ENCODE measurements at regions of chrX and their contacts with region 1.

Region 1: DNA sequence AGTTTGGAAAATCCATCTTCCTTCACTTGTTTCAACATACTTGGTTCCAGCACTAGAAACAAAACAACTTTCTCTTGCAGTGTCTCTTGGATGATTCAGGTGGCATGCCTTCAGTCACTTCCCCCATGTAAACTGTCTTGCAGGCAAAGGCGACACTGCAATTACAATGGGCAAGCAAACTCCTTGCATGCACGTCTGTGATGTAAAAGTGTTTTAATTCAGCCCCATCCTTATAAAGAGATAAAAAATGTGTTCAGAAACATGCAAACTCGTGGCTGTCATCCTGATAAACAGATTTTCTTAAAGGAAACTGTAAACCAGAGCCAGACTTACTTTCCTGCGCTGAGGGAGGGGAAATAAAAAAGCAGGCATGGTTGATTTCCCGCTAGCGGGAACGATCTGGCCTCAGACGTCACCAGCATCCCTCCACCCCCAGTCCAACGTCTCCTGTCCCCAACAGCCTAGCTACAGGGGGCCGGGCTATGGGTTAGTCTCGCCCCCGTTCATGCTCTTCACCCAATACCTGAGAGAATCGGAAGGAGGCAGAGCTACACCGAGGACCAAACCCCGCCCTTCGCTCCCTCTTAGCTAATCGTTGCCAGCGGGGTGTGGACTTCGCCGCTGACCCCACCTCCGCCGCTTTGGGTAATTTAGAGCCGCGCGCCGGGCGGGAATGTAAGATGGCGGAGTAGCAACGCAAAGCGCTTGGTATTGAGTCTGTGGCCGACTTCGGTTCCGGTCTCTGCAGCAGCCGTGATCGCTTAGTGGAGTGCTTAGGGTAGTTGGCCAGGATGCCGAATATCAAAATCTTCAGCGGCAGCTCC is at the start of gene PRPS1:
- DNase-seq: peak; percentile 84 to 93 (median 89)
- H3K4me3 ChIP-seq: peak within 1 kb of the TSS; percentile 79 to 86
- H3K4me3 Mint-ChIP-seq: peak within 1 kb of the TSS; percentile 85 to 99 (median 95)
- H3K27ac ChIP-seq: peak within 1 kb of the TSS; percentile 73
- H3K27ac Mint-ChIP-seq: peak within 1 kb of the TSS; percentile 94 to 96 (median 95)
- H3K4me1 ChIP-seq: peaks cover 31% of the 10 kb centered on the region
- H3K4me1 Mint-ChIP-seq: peaks cover 16 to 46% (median 29%) of the 10 kb centered on the region in 4 donors
- H3K27me3 ChIP-seq: no peaks in the 10 kb centered on the region
- H3K27me3 Mint-ChIP-seq: no peaks in the 10 kb centered on the region
- total RNA-seq, gene PRPS1: 56.1 to 61.3 TPM

Region 2: GRCh38 chrX:107205770-107206696 is 422.0 kb before region 1 on chrX and contains the starts of genes DNAAF6 and NUP62CL:
- CTCF ChIA-PET with region 1: no interaction called
- POLR2A ChIA-PET with region 1: no interaction called
- intact Hi-C with region 1: loop called (anchors 5 kb)
- DNase-seq: peak; percentile 64 to 75 (median 70)
- H3K4me3 ChIP-seq: peak within 1 kb of the TSS; percentile 42 to 63
- H3K4me3 Mint-ChIP-seq: peak within 1 kb of the TSS; percentile 85 to 94 (median 91)
- H3K27ac ChIP-seq: peak within 1 kb of the TSS; percentile 43
- H3K27ac Mint-ChIP-seq: peak within 1 kb of the TSS in 6 of 7 donors; percentile 79 to 93 (median 88)
- H3K4me1 ChIP-seq: no peaks in the 10 kb centered on the region
- H3K4me1 Mint-ChIP-seq: peaks cover 2 to 9% (median 7%) of the 10 kb centered on the region in 4 donors
- H3K27me3 ChIP-seq: no peaks in the 10 kb centered on the region
- H3K27me3 Mint-ChIP-seq: peaks cover 0 to 2% of the 10 kb centered on the region in 2 donors
- total RNA-seq, gene DNAAF6: not detected
- total RNA-seq, gene NUP62CL: 2.3 to 2.7 TPM

Region 3: GRCh38 chrX:107396783-107397182 is 231.3 kb before region 1 on chrX:
- CTCF ChIA-PET with region 1: no interaction called
- POLR2A ChIA-PET with region 1: no interaction called
- intact Hi-C with region 1: no loop called
- DNase-seq: no peak
- H3K4me3 ChIP-seq: no peak overlapping the region
- H3K4me3 Mint-ChIP-seq: no peak overlapping the region
- H3K27ac ChIP-seq: no peak overlapping the region
- H3K27ac Mint-ChIP-seq: no peak overlapping the region
- H3K4me1 ChIP-seq: no peaks in the 10 kb centered on the region
- H3K4me1 Mint-ChIP-seq: no peaks in the 10 kb centered on the region
- H3K27me3 ChIP-seq: no peaks in the 10 kb centered on the region
- H3K27me3 Mint-ChIP-seq: peaks cover 5 to 9% of the 10 kb centered on the region in 2 donors

Region 4: DNA sequence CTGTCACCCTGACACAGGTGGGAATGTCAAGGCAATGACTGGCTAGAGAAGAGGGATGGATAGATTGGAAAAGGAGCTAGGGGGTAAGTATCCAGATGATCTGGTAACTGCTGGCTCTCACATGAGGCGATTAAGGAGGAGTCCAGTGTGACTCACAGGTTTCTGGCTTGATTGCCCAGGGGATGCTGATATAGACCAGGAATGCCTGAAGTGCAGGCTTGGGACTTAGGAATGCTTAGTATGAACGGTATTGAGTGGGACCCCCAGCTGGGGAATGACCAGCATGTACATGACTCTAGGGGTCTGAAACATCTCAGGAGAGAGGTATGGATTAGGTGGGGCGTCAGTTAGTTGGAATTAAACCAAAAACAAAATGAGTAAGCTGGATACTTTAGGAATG is 65.6 kb before region 1 on chrX:
- CTCF ChIA-PET with region 1: no interaction called
- POLR2A ChIA-PET with region 1: no interaction called
- intact Hi-C with region 1: no loop called
- DNase-seq: no peak
- H3K4me3 ChIP-seq: no peak overlapping the region
- H3K4me3 Mint-ChIP-seq: no peak overlapping the region
- H3K27ac ChIP-seq: no peak overlapping the region
- H3K27ac Mint-ChIP-seq: peak overlapping the region in 1 of 7 donors; percentile 0
- H3K4me1 ChIP-seq: no peaks in the 10 kb centered on the region
- H3K4me1 Mint-ChIP-seq: no peaks in the 10 kb centered on the region
- H3K27me3 ChIP-seq: no peaks in the 10 kb centered on the region
- H3K27me3 Mint-ChIP-seq: peaks cover 1 to 2% of the 10 kb centered on the region in 2 donors

Region 5: DNA sequence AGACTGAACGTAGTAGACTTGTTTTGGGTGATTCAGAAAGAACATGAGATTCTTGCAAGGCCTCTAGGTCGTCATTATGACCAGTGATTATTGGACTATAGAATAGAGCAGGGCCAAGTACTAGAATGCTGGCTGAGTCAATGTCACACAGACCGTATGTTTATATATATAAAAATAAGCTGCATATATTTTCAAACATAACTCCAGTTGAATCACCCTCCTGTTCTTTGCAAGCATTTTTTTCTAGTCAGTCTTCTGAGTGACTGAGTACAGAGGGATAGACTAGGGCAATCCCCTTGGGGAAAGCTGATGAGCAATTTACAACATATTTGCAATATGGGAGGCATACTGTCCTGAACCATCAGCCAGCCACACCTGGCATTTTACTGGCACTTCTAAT is 48.1 kb before region 1 on chrX:
- CTCF ChIA-PET with region 1: no interaction called
- POLR2A ChIA-PET with region 1: no interaction called
- intact Hi-C with region 1: no loop called
- DNase-seq: no peak
- H3K4me3 ChIP-seq: no peak overlapping the region
- H3K4me3 Mint-ChIP-seq: no peak overlapping the region
- H3K27ac ChIP-seq: no peak overlapping the region
- H3K27ac Mint-ChIP-seq: no peak overlapping the region
- H3K4me1 ChIP-seq: no peaks in the 10 kb centered on the region
- H3K4me1 Mint-ChIP-seq: no peaks in the 10 kb centered on the region
- H3K27me3 ChIP-seq: no peaks in the 10 kb centered on the region
- H3K27me3 Mint-ChIP-seq: peaks cover 0 to 2% of the 10 kb centered on the region in 2 donors

Region 6: DNA sequence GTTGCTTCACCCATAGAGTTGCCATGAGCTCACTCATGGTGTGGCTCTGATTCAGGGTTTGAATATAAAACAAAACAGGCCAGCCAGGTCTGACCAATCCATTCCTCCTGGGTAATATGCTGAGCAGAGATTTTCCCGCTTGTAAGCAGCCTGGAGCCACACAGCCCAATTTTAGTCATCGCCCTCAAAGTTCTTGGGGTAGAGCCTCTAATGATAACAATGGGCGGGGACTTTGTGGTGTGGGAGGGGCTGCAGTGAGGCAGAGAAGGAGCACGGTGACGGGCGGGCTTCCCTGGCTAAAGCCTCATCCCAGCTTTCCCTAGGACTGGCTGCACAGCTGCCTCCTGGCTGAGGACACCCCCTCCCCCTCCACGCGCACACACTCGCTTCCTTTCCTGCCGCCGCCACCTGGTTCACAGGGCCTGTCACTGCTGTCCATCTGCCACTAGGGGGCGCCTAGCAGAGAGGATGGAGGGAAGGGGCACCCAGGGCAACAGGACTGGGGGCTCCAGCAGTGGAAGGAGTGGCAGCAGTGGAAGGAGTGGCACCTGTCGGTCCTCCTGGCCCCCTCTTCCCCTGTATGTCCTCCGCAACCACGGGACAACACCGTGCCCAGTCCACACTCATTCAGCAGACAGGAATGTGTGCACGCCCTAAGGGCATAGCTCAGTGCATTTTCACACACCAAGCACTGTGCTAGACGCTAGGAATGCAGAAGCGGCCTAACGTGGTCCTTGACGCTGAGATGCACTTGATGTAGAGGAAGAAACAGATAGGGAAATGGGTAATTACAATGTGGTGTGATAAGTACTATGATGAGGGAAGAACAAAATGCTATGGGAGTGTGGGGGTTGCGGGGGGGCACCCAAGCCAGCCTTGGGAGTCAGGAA is 27.1 kb after region 1 on chrX:
- CTCF ChIA-PET with region 1: interaction called, 62 read pairs
- POLR2A ChIA-PET with region 1: interaction called, 14 read pairs
- intact Hi-C with region 1: no loop called
- DNase-seq: peak; percentile 64 to 71 (median 67)
- H3K4me3 ChIP-seq: no peak overlapping the region
- H3K4me3 Mint-ChIP-seq: peak overlapping the region in 2 of 8 donors; percentile 2 to 9
- H3K27ac ChIP-seq: no peak overlapping the region
- H3K27ac Mint-ChIP-seq: peak overlapping the region in 5 of 7 donors; percentile 47 to 82 (median 57)
- H3K4me1 ChIP-seq: peaks cover 12% of the 10 kb centered on the region
- H3K4me1 Mint-ChIP-seq: peaks cover 11 to 15% (median 14%) of the 10 kb centered on the region in 4 donors
- H3K27me3 ChIP-seq: no peaks in the 10 kb centered on the region
- H3K27me3 Mint-ChIP-seq: no peaks in the 10 kb centered on the region

Region 7: DNA sequence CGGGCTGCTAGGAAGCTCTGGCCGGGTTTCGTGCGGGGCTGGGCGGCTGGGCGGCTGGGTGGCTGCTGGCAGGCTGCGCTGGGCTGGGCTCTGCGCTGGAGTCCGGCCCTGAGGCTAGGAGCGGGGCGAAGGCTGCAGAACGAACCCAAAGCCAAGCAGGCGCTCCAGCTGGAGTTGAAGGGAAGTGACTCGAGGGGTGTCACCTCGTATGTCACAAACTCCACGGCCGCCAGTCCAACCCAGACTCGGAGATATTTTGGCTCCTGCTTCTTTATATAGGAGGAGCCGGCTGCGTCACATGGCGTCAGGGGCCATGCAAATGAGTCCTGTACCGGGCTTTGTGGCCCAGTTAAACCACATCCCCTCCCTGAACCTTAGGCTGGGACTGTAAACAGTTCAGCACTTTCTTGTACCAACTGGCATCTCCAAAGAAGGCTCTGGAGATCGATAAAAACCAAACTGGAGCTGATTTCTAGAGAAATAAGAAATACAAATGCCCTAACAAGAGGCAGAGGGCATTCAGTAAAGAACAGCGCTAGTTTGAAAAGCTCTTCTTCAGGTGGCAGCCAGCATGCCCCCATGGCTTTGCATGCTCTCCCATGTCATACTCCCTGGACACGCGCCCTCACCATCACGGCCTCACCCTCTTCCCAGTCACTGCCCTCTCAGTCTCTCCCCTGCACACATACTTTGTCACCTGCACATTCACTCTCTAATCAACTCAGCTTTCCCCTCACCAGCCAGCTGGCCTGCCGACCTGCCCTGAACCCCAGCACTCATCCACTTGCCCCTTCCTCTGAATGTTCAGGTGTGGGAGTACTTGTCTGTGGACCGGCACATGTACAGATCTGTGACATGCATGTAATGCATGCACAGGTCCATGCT is 89.0 kb after region 1 on chrX:
- CTCF ChIA-PET with region 1: no interaction called
- POLR2A ChIA-PET with region 1: interaction called, 36 read pairs
- intact Hi-C with region 1: loop called (anchors 1 kb)
- DNase-seq: peak; percentile 92 to 95 (median 95)
- H3K4me3 ChIP-seq: peak overlapping the region; percentile 61 to 92
- H3K4me3 Mint-ChIP-seq: peak overlapping the region; percentile 88 to 97 (median 96)
- H3K27ac ChIP-seq: peak overlapping the region; percentile 95
- H3K27ac Mint-ChIP-seq: peak overlapping the region; percentile 99 to 100 (median 100)
- H3K4me1 ChIP-seq: peaks cover 49% of the 10 kb centered on the region
- H3K4me1 Mint-ChIP-seq: peaks cover 25 to 61% (median 48%) of the 10 kb centered on the region in 4 donors
- H3K27me3 ChIP-seq: no peaks in the 10 kb centered on the region
- H3K27me3 Mint-ChIP-seq: no peaks in the 10 kb centered on the region

Region 8: GRCh38 chrX:108091266-108091877 is 463.3 kb after region 1 on chrX and contains the starts of genes ATG4A and PSMD10:
- CTCF ChIA-PET with region 1: no interaction called
- POLR2A ChIA-PET with region 1: interaction called, 3 read pairs
- intact Hi-C with region 1: loop called (anchors 1 kb)
- DNase-seq: peak; percentile 86 to 96 (median 90)
- H3K4me3 ChIP-seq: peak within 1 kb of the TSS; percentile 48 to 75
- H3K4me3 Mint-ChIP-seq: no peak within 1 kb of the TSS
- H3K27ac ChIP-seq: peak within 1 kb of the TSS; percentile 81
- H3K27ac Mint-ChIP-seq: no peak within 1 kb of the TSS
- H3K4me1 ChIP-seq: peaks cover 22% of the 10 kb centered on the region
- H3K4me1 Mint-ChIP-seq: peaks cover 5 to 17% (median 7%) of the 10 kb centered on the region in 4 donors
- H3K27me3 ChIP-seq: no peaks in the 10 kb centered on the region
- H3K27me3 Mint-ChIP-seq: no peaks in the 10 kb centered on the region
- total RNA-seq, gene ATG4A: 7.6 to 8.1 TPM
- total RNA-seq, gene PSMD10: 29.0 to 32.6 TPM

Measured in CD4-positive, alpha-beta memory T cell (primary cell).